Colonic mucosa (tissue), 4 donors: ENCODE measurements at regions of chr1 and their contacts with region 1.

Region 1: DNA sequence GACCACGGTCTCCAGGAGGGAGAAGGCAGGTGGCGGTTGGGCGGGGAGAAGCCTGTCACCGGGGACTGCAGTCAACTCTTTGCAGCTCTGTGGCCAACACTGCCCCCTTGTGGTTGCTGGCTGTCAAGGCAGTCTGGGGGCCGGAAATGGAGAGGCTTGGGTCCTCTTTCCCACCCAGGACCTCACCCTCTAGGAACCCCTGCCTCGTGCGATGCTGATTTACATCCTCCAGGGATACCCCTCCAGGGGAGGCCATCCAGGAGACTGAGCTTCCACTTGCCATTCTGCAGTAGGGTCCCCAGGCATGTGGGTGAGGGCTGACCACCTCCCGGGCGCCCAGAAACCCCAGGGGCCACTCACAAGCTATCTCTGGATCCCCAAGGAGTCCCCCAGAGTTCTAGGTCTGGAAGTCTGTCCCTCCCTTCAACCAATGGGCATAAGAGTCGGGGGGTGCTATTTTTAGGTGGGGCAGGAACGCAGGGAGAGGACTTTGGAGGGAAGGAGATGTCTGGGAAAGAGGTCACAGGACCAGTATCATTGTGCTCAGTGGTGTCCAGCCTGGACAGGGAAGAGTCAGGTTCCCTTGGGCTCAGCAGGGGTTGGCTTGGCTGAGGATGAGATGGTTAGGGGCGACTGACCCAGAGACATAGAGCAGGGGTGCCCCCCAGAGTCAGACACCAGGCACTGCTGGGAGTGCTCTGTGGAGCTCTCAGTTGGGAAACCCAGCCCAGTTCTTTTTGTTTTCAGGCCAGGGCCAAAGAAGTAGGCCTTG is 7.1 kb upstream of the GPR61 start:
- DNase-seq: peak; percentile 89
- H3K4me3 ChIP-seq: peak overlapping the region; percentile 4
- H3K27ac ChIP-seq: peak overlapping the region; percentile 17
- H3K4me1 ChIP-seq: peaks cover 5% of the 10 kb centered on the region
- H3K27me3 ChIP-seq: no peaks in the 10 kb centered on the region
- CTCF ChIP-seq: peak; percentile 86

Region 2: GRCh38 chr1:109426278-109427170 is 106.0 kb before region 1 on chr1 and contains the start of gene PSMA5:
- intact Hi-C with region 1: loop called (anchors 10 kb)
- DNase-seq: peak; percentile 97
- H3K4me3 ChIP-seq: peak within 1 kb of the TSS; percentile 92
- H3K27ac ChIP-seq: peak within 1 kb of the TSS; percentile 93
- H3K4me1 ChIP-seq: peaks cover 18% of the 10 kb centered on the region
- H3K27me3 ChIP-seq: no peaks in the 10 kb centered on the region
- CTCF ChIP-seq: no peak
- total RNA-seq, gene PSMA5: 93.9 to 163 TPM

Region 3: DNA sequence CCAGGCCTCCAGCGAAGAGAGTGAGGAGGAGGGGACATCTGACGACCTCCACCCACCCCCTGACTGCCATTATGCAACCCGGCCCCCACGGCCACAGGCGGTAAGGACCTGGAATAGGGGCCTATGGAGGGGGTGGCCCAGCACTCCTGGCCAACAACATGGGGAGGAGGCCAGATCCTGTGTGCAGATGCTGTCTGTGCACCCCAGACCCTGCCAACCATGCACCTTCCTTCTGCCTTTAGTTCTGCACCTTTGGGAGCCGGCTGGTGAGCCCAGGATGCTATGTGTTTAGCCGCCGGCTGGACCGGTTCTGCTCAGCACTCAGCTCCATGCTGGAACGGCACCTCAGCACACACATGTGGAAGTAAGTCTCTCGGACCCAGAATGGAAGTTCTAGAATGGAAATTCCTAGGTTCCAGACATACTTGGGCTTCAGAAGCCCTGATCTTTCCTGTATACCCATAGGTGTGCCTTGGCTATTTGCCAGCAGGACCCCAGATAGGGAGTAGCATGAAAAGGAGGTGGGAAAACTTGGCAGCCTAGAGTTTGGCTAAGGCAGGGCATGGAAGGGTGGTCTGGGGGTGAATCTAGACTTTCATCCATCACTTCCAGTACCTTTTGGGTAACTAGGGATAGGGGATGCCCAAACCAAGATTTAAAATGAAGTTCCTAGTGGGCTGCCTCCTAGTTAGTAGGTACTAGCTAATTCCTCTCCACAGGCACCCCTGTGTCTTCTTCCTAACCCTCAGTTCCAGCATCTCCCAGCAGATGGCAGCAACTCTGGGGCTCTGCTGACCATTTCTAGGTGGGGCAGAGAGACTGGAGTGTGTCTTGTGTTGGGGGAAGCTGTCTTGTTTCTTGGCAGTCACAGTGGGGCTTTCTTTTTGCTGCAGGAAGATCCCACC is 42.3 kb before region 1 on chr1:
- intact Hi-C with region 1: loop called (anchors 2 kb)
- DNase-seq: peak; percentile 79
- H3K4me3 ChIP-seq: no peak overlapping the region
- H3K27ac ChIP-seq: no peak overlapping the region
- H3K4me1 ChIP-seq: peaks cover 5% of the 10 kb centered on the region
- H3K27me3 ChIP-seq: no peaks in the 10 kb centered on the region
- CTCF ChIP-seq: peak; percentile 76

Region 4: GRCh38 chr1:109499661-109500536 is 32.7 kb before region 1 on chr1:
- intact Hi-C with region 1: loop called (anchors 2 kb)
- DNase-seq: peak; percentile 78
- H3K4me3 ChIP-seq: no peak overlapping the region
- H3K27ac ChIP-seq: peak overlapping the region; percentile 28
- H3K4me1 ChIP-seq: peaks cover 16% of the 10 kb centered on the region
- H3K27me3 ChIP-seq: no peaks in the 10 kb centered on the region
- CTCF ChIP-seq: peak; percentile 28

Region 5: DNA sequence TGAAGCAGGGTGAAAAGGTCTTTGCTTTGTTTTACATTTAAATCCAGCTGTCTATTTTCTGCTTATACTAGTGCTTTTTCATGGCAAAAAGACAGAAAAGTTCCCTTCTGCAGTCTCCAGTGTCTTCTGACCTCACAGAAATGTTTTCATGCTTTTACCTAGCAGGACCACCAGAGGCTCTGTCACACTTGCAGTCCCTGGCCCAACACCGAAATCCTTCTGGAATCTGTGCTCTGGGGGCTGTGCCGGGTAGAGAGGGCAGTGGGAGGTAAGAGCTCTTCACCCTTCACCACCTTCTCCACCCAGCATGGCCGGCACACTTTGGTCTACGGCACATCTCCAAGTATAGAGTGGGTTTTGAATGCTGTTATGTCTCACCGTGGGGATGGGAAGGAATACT is 66.1 kb after region 1 on chr1:
- intact Hi-C with region 1: no loop called
- DNase-seq: no peak
- H3K4me3 ChIP-seq: no peak overlapping the region
- H3K27ac ChIP-seq: no peak overlapping the region
- H3K4me1 ChIP-seq: no peaks in the 10 kb centered on the region
- H3K27me3 ChIP-seq: no peaks in the 10 kb centered on the region
- CTCF ChIP-seq: no peak

Region 6: GRCh38 chr1:109718491-109718890 is 185.9 kb after region 1 on chr1:
- intact Hi-C with region 1: no loop called
- DNase-seq: no peak
- H3K4me3 ChIP-seq: no peak overlapping the region
- H3K27ac ChIP-seq: no peak overlapping the region
- H3K4me1 ChIP-seq: no peaks in the 10 kb centered on the region
- H3K27me3 ChIP-seq: no peaks in the 10 kb centered on the region
- CTCF ChIP-seq: peak; percentile 19